Panc1 (cell line): ENCODE measurements at regions of chr20 and their contacts with region 1.

Region 1: DNA sequence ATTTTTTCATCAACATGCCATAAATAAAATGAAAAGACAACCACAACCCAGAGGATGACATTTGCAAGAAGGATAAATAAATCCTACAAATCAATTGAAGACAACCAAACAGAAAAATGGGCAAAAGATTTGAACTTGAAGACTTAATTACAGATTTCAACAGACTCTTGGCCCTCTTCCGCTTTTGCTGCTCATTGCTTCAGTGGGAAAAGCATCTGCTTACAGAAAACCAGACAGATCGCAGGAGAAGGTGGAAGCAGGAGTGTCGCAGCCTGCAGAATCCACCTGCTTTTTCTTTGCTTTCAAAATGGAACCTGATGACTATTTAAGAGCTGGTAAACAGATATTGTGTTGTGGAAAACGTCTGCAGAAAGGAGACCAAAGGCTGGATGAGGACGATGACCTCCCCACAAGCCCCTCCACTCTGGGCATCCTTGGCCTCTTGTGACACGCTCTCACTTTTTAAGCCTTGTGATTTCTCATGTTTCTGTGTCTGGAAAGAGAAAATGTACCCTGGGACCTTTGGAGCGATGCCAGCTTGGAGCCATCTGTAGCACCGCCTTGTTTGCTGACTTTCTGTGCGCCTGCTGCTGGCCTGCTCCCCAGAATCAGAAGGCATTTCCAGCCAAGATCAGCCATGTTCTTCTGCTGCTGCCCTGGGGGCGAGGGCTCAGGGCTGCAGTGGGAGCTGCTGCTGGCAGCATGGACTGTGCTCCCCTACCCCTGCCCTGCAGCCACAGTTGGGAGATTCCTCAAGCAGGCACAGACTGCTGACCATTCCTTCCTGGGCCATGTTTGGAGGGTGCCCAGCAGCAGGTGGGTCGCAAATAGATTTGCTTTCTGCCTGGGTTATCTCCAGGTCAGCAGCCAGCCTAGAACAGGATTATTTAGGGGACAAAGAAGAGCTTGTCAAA is 3.6 kb upstream of the CSTL1 start:
- DNase-seq: no peak
- ATAC-seq: no peak
- H3K4me3 ChIP-seq: no peak overlapping the region
- H3K27ac ChIP-seq: no peak overlapping the region
- H3K4me1 ChIP-seq: no peaks in the 10 kb centered on the region
- H3K27me3 ChIP-seq: no peaks in the 10 kb centered on the region
- CTCF ChIP-seq: no peak

Region 2: DNA sequence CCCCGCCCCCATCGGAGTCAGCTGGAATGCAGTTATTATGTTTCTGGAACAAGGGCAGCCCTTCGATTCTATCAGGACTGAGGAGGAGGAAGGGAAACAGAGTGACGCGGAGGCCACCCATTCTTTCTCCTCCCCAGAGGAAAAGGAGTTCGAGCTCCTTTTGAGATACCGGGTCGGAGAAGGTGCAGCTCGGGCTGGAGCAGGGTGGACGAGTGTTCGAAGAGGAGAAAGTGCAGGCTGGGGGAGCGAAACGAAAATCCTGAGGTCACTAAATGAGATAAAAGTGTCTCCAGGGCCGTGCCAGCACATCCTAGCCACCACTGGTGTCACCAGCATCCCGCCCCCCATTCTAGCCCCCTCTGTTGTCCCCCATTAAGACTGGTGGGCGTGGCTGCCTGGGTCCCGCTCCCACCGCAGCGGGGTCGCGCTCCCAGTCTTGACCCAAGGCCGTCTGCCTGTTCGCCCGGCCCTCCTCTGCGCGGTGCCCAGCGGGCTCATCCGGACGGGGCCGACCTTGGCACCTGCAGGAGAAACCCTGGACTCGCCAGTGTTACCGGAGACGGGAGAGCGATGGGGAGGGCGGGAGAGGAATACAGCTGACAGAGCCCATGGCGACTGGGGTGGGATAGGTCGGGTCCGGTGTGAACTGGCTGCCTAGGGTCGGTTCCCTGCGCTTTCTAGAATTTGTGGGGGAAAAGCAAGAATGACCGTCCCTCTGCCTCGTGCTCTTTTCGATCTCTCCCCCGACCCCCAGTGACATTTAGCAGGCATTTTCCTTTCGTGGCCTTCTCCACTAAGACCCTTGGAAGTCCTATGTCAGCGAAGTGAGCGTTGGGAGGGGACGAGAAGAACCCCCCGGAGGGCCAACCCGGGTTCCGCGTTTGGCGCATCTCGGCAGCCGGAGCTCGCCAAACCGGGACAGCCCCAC is 867.7 kb before region 1 on chr20:
- CTCF ChIA-PET with region 1: no interaction called
- POLR2A ChIA-PET with region 1: interaction called, 10 read pairs
- in situ Hi-C with region 1: no loop called
- intact Hi-C with region 1: no loop called
- DNase-seq: no peak
- ATAC-seq: peak; percentile 85
- H3K4me3 ChIP-seq: peak overlapping the region; percentile 41 to 59
- H3K27ac ChIP-seq: peak overlapping the region; percentile 83
- H3K4me1 ChIP-seq: peaks cover 46% of the 10 kb centered on the region
- H3K27me3 ChIP-seq: no peaks in the 10 kb centered on the region; the same call in 1 of the 2 replicates
- CTCF ChIP-seq: no peak

Region 3: DNA sequence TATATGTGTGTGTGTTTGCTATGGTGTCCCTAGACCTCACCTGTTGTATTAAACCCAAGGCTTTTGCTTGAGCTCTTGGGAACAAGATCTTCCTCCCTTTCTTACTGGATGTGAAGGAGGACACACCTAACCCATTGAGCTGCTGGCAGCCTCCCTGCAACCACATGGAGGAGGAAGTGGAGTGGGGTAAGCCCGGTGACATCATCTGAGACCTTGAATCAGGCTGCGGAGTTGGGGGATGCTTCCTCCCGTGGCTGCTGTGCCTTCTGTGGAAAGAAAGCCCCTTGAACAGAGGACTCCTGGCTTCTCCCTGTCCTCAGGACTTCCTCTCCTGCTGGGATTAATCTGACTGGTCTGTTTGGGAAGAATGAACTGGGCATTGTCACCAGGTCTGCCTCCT is 13.5 kb after region 1 on chr20:
- CTCF ChIA-PET with region 1: interaction called, 10 read pairs
- POLR2A ChIA-PET with region 1: no interaction called
- in situ Hi-C with region 1: no loop called
- intact Hi-C with region 1: no loop called
- DNase-seq: no peak
- ATAC-seq: no peak
- H3K4me3 ChIP-seq: no peak overlapping the region
- H3K27ac ChIP-seq: no peak overlapping the region
- H3K4me1 ChIP-seq: no peaks in the 10 kb centered on the region
- H3K27me3 ChIP-seq: no peaks in the 10 kb centered on the region
- CTCF ChIP-seq: no peak